ENCODE measurements at regions of chr6 and their contacts with region 1.

Region 1: DNA sequence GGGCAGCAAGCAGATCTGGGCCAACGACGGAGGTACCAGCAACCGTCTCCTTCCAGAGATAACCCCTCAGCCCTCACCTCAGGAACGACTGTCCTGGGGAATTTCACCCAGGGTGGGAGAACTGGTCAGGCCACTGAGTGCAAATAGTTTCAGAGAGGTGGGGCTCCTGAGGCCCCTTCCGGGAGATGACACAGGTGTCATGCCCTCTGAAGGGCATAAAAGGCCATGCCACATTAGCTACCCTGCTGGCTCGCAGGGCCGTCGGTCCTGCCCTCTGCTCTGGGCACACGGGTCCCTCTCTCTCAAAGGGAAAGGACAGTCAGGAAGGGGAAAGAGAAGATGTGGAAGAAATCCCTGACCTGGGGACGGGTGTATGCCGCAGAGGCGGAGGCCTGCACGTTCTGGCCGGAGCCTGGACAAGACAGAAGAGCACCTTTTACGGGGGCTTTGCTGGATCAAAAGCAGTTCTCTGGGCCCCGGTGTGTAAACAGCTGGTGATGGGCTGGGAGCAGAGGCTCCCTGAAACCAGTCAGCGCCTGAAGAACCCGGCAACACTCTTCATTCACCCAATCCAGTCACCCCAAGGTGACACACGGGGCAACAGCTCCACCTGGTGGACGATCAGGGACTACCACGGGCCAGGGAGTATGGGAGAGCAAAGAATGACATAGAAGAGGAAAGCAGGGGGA is 6.4 kb upstream of the TAF8 start:
- DNase-seq: peak; percentile 86
- H3K4me3 ChIP-seq: peak overlapping the region; percentile 38
- H3K27ac ChIP-seq: peak overlapping the region; percentile 97
- H3K4me1 ChIP-seq: peaks cover 98% of the 10 kb centered on the region
- H3K27me3 ChIP-seq: no peaks in the 10 kb centered on the region
- CTCF ChIP-seq: peak; percentile 98

Region 2: DNA sequence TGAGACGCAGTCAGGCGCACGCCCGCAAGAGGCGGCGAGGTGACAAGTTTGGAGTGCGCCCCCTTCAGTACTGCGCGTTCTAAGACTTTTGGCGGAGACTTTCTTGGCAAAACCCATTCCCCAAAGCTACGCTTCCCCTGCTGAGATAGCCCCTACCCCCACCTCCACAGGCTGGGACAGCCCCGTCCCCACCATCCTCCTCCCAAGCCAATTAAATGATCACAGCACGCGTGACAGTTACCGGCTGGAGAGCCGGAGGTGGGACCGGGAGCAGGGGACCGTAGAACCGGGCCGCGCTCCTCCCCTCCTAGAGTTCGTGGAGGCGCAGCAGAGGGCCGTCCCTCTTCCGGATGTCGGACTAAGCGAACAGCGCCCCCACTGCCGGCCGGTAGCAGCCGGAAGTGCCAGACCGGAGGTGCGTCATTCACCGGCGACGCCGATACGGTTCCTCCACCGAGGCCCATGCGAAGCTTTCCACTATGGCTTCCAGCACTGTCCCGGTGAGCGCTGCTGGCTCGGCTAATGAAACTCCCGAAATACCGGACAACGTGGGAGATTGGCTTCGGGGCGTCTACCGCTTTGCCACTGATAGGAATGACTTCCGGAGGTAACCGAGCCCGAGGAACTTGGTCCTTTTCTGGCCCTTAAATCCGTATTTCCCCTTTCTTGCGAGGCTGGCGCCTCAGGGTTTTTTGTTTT is 256.6 kb before region 1 on chr6 and contains the start of gene TOMM6:
- intact Hi-C with region 1: loop called (anchors 10 kb)
- DNase-seq: peak; percentile 95
- H3K4me3 ChIP-seq: peak within 1 kb of the TSS; percentile 90
- H3K27ac ChIP-seq: peak within 1 kb of the TSS; percentile 95
- H3K4me1 ChIP-seq: peaks cover 94% of the 10 kb centered on the region
- H3K27me3 ChIP-seq: no peaks in the 10 kb centered on the region
- CTCF ChIP-seq: peak; percentile 94
- total RNA-seq, gene TOMM6: 177 TPM

Region 3: GRCh38 chr6:41846666-41847237 is 197.2 kb before region 1 on chr6:
- intact Hi-C with region 1: loop called (anchors 5 kb)
- DNase-seq: no peak
- H3K4me3 ChIP-seq: no peak overlapping the region
- H3K27ac ChIP-seq: peak overlapping the region; percentile 75
- H3K4me1 ChIP-seq: peaks cover 17% of the 10 kb centered on the region
- H3K27me3 ChIP-seq: no peaks in the 10 kb centered on the region
- CTCF ChIP-seq: peak; percentile 89

Region 4: DNA sequence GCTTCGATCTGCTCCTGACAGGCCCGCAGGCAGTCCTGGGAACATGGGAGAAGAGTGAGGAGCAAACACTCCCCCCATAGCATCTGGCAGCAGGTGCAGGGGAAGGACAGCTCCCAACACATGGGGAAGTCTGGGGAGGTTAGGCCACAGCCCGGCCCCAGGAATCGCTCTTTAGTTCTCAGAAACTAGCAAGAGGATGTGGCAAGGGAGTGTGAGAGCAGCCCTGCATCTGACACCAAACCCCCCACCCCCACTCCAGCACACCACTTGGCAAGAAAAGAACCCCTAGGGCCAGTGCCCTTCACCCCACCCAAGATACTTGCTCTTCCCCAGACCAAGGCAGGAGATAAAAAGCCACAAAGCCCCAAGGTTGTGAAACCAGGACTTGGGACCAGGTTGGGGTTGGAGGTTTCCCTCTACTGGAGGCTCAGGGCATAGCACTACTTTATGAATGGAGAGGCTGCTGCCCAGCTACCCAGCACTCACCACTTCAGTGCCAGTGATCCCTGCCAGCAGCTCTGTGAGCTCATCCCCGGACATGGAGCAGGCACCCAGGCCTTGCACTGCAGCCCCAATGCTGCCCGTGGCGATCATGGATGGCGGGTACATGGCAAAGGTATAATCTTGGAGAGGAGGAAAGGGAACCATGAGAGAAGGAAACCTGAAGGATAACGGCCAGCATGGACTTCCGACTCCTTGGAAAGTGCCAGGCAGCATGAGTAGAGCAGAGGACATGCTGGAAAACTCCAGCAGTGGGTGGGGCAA is 107.7 kb before region 1 on chr6:
- intact Hi-C with region 1: loop called (anchors 5 kb)
- DNase-seq: peak; percentile 69
- H3K4me3 ChIP-seq: no peak overlapping the region
- H3K27ac ChIP-seq: peak overlapping the region; percentile 97
- H3K4me1 ChIP-seq: peaks cover 65% of the 10 kb centered on the region
- H3K27me3 ChIP-seq: no peaks in the 10 kb centered on the region
- CTCF ChIP-seq: peak; percentile 88

Measured in left ventricle myocardium inferior (tissue), 1 donor.